ENCODE measurements at regions of chr6 and their contacts with region 1.

Region 1: GRCh38 chr6:63504777-63505384 is 67.4 kb upstream of the LOC128125822 start:
- DNase-seq: peak; percentile 89
- ATAC-seq: peak; percentile 93
- H3K4me3 ChIP-seq: 0 out of 2 replicates have a peak overlapping the region, but pooled peaks have one; percentile 18
- H3K27ac ChIP-seq: peak overlapping the region; percentile 66
- H3K4me1 ChIP-seq: peaks cover 30% of the 10 kb centered on the region
- H3K27me3 ChIP-seq: no peaks in the 10 kb centered on the region
- CTCF ChIP-seq: no peak
- EP300 ChIP-seq: peak; percentile 92 to 98
- POLR2A ChIP-seq: no peak
- RAD21 ChIP-seq: peak; percentile 29; the same call in 1 of the 2 replicates

Region 2: DNA sequence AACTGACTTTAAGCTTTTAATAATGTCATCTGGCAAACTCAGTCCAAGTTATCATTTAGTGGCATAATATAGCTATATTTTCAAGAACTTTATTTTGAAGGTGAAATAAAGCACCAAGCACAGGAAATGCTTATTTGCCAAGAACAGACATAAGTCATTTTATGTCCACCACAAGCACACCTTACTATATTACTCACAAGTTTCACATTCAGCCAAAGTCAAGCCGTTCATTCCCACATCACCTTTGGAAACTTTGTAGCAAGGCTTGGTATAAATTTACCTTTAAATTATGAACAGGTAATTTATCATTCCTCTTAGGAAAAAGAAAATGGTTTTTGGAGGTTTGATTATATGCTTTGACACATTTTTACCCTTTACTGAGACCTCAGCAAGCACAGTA is 530.4 kb before region 1 on chr6:
- CTCF ChIA-PET with region 1: no interaction called
- POLR2A ChIA-PET with region 1: no interaction called
- RAD21 ChIA-PET with region 1: no interaction called
- SMC1A ChIA-PET with region 1: no interaction called
- in situ Hi-C with region 1: no loop called
- intact Hi-C with region 1: loop called (anchors 10 kb)
- DNase-seq: no peak
- ATAC-seq: peak; percentile 81
- H3K4me3 ChIP-seq: no peak overlapping the region
- H3K27ac ChIP-seq: no peak overlapping the region
- H3K4me1 ChIP-seq: no peaks in the 10 kb centered on the region
- H3K27me3 ChIP-seq: no peaks in the 10 kb centered on the region
- CTCF ChIP-seq: no peak
- EP300 ChIP-seq: peak in 1 of 2 experiments; percentile 74; a peak in 1 of 4 replicates
- POLR2A ChIP-seq: no peak
- RAD21 ChIP-seq: no peak

Region 3: DNA sequence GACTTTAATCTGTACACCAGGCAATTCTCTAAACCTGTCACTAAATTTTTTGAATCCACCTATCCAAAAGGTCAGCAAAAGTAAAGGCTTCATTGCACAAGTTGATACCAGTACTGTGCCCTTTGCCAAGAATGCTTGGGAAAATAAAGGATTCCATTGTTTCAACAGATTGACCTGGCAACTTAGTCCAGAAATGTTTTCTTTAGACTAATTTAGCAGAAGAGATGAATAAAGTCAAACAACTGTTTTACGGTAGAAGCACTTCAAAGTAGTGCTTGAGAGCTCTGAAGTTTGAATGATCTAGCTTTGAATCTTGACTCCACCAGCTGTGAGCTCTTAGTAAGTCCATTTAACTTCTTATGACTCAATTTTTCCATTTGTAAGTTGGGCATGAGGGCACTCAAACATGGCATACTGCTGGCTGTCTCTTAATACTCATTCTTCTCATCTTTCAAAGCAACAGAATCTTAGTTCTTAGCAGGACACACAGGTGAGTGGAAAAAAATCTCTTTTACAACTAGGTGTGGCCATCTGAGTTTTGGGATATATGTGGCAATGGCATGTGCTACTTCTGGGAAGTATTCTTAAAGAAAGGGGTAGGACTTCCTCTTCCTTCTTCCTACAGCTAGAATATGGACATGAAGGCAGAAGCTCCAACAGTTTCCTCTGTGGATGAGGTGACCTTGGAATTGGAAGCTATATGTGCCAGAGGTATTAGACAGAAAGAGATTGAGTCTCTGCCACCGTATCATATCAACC is 11.5 kb after region 1 on chr6:
- CTCF ChIA-PET with region 1: interaction called, 8 read pairs
- POLR2A ChIA-PET with region 1: interaction called, 7 read pairs
- RAD21 ChIA-PET with region 1: interaction called, 30 read pairs
- SMC1A ChIA-PET with region 1: interaction called, 96 read pairs
- in situ Hi-C with region 1: no loop called
- intact Hi-C with region 1: no loop called
- DNase-seq: no peak
- ATAC-seq: no peak
- H3K4me3 ChIP-seq: no peak overlapping the region
- H3K27ac ChIP-seq: no peak overlapping the region
- H3K4me1 ChIP-seq: peaks cover 18% of the 10 kb centered on the region
- H3K27me3 ChIP-seq: no peaks in the 10 kb centered on the region
- CTCF ChIP-seq: no peak
- EP300 ChIP-seq: no peak
- POLR2A ChIP-seq: no peak
- RAD21 ChIP-seq: no peak

Region 4: DNA sequence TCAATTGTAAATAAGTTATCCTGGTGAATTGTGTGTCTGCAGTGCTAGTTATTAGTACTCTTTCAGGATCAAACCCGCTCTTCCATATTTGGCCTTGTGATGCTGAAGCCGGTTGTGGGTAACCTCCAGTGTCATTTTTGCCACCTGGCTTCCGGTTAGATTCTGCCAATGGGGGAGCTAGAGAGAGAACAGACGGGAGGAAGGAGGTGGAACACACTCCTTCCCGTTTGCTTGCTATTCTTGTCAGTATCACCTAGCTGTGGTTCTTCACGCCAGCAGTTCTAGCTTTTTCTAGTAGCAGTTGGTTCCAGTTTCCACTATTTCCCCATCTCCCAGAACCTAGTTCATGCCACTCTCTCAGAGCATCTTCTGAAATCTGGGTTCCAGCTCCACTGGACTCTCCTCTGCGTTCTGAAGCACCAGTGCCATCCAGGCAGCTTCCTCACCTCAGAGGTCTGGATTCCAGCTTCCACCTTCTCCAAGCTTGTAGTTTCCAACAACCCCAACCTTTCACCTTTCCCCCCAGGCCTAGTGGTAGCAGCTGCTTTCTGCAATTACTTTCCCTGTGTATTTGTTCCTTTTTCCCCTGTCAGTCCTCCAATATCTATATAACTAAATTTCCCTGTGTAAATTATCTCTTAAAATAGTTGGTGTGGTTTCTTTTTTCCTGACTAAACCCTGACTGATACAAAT is 20.5 kb after region 1 on chr6:
- CTCF ChIA-PET with region 1: interaction called, 11 read pairs
- POLR2A ChIA-PET with region 1: interaction called, 5 read pairs
- RAD21 ChIA-PET with region 1: interaction called, 30 read pairs
- SMC1A ChIA-PET with region 1: interaction called, 96 read pairs
- in situ Hi-C with region 1: no loop called
- intact Hi-C with region 1: no loop called
- DNase-seq: no peak
- ATAC-seq: peak; percentile 40
- H3K4me3 ChIP-seq: no peak overlapping the region
- H3K27ac ChIP-seq: no peak overlapping the region
- H3K4me1 ChIP-seq: peaks cover 21% of the 10 kb centered on the region
- H3K27me3 ChIP-seq: no peaks in the 10 kb centered on the region
- CTCF ChIP-seq: 0 out of 6 replicates have a peak, but pooled peaks of 1 of the 3 experiments have one; percentile 4
- EP300 ChIP-seq: no peak
- POLR2A ChIP-seq: no peak
- RAD21 ChIP-seq: no peak

Region 5: GRCh38 chr6:63553208-63553607 is 48.3 kb after region 1 on chr6:
- CTCF ChIA-PET with region 1: interaction called, 6 read pairs
- POLR2A ChIA-PET with region 1: interaction called, 7 read pairs
- RAD21 ChIA-PET with region 1: interaction called, 6 read pairs
- SMC1A ChIA-PET with region 1: interaction called, 7 read pairs
- in situ Hi-C with region 1: no loop called
- intact Hi-C with region 1: loop called (anchors 2 kb)
- DNase-seq: peak; percentile 81
- ATAC-seq: peak; percentile 98
- H3K4me3 ChIP-seq: no peak overlapping the region
- H3K27ac ChIP-seq: no peak overlapping the region
- H3K4me1 ChIP-seq: peaks cover 11% of the 10 kb centered on the region; the same call in 1 of the 2 replicates
- H3K27me3 ChIP-seq: no peaks in the 10 kb centered on the region
- CTCF ChIP-seq: no peak
- EP300 ChIP-seq: peak; percentile 71 to 94; a peak in 3 of 4 replicates
- POLR2A ChIP-seq: no peak
- RAD21 ChIP-seq: no peak

Measured in GM12878 (cell line).